ENCODE measurements at regions of chr20 and their contacts with region 1.

Region 1: DNA sequence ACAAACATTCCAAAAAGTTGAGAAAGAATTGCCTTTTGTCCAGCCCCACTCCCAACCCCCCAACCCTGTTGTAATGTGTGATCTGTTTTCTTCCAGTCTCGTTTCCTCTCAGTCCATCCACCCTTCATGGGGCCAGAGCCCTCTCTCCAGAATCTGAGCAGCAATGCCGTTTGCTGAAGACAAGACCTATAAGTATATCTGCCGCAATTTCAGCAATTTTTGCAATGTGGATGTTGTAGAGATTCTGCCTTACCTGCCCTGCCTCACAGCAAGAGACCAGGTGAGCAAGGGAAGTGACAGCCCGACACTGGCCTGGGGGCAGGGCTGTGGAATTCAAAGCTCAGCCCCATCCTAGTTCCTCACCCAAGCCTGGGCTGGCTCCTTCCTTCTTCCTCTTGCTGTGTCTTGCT is 7.8 kb downstream of the MAVS start:
- DNase-seq: no peak
- ATAC-seq: peak; percentile 40
- H3K4me3 ChIP-seq: no peak overlapping the region
- H3K27ac ChIP-seq: no peak overlapping the region
- H3K4me1 ChIP-seq: no peaks in the 10 kb centered on the region
- H3K27me3 ChIP-seq: no peaks in the 10 kb centered on the region
- CTCF ChIP-seq: no peak
- EP300 ChIP-seq: no peak
- POLR2A ChIP-seq: no peak
- RAD21 ChIP-seq: no peak

Region 2: GRCh38 chr20:3590164-3590563 is 264.3 kb before region 1 on chr20:
- CTCF ChIA-PET with region 1: no interaction called
- POLR2A ChIA-PET with region 1: no interaction called
- RAD21 ChIA-PET with region 1: no interaction called
- SMC1A ChIA-PET with region 1: no interaction called
- in situ Hi-C with region 1: no loop called
- intact Hi-C with region 1: no loop called
- DNase-seq: no peak
- ATAC-seq: no peak
- H3K4me3 ChIP-seq: no peak overlapping the region
- H3K27ac ChIP-seq: no peak overlapping the region
- H3K4me1 ChIP-seq: no peaks in the 10 kb centered on the region
- H3K27me3 ChIP-seq: no peaks in the 10 kb centered on the region
- CTCF ChIP-seq: no peak
- EP300 ChIP-seq: no peak
- POLR2A ChIP-seq: no peak
- RAD21 ChIP-seq: no peak

Region 3: DNA sequence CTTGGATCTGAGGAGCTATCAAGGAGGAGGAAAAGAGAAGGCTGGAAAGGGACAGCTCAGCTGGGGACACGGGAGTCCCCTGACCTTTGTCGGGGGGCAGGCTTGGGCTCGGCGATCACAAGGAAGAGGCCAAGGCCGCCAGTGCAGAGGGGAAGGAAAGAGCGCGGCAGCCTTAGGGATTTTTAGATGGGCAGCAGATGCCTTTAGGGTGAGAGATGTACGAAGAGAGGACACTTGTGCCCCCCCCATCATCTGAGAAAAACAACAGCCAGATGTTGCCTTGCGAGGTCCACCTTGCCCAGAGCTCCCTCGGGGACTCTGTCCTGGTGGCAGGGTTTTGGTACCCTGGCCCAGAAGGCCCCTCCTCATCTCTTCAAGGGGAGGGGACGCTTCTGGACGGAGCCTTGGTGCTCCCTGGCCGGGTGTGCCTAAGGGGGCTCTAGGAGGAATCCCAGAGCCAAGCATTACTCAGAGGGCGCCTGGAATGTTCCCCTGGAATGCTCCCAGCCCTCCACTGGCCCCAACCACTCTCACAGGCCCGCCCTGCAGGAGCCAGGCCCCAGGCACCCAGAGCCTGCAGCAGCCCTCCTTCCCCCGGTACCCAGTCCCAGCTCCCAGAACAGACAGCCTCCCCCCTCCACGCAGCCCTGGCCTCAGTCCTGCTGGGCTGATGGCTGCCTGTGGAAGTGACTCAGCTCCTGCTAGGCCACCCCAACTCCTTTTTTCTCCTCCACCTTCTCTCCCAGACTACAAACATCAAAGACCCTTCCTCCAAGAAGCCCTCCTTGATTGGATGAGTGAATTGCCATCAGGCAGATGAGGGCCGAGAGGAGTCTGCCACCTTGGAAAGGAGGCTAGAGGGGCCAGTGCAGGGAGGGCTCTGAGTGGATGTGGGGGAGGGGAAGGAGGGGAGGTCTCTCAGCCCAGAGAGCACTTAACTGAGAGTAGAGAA is 174.4 kb before region 1 on chr20:
- CTCF ChIA-PET with region 1: interaction called, 3 read pairs
- POLR2A ChIA-PET with region 1: no interaction called
- RAD21 ChIA-PET with region 1: no interaction called
- SMC1A ChIA-PET with region 1: interaction called, 3 read pairs
- in situ Hi-C with region 1: no loop called
- intact Hi-C with region 1: loop called (anchors 1 kb)
- DNase-seq: no peak
- ATAC-seq: no peak
- H3K4me3 ChIP-seq: no peak overlapping the region
- H3K27ac ChIP-seq: no peak overlapping the region
- H3K4me1 ChIP-seq: no peaks in the 10 kb centered on the region; the same call in 1 of the 2 replicates
- H3K27me3 ChIP-seq: peaks cover 3% of the 10 kb centered on the region in 2 experiments; a peak in 2 of 4 replicates
- CTCF ChIP-seq: no peak
- EP300 ChIP-seq: no peak
- POLR2A ChIP-seq: no peak
- RAD21 ChIP-seq: no peak

Region 4: GRCh38 chr20:3710703-3711483 is 143.6 kb before region 1 on chr20:
- CTCF ChIA-PET with region 1: interaction called, 4 read pairs
- POLR2A ChIA-PET with region 1: interaction called, 3 read pairs
- RAD21 ChIA-PET with region 1: no interaction called
- SMC1A ChIA-PET with region 1: interaction called, 5 read pairs
- in situ Hi-C with region 1: no loop called
- intact Hi-C with region 1: loop called (anchors 10 kb)
- DNase-seq: no peak
- ATAC-seq: peak; percentile 89
- H3K4me3 ChIP-seq: no peak overlapping the region
- H3K27ac ChIP-seq: no peak overlapping the region
- H3K4me1 ChIP-seq: peaks cover 5% of the 10 kb centered on the region
- H3K27me3 ChIP-seq: no peaks in the 10 kb centered on the region
- CTCF ChIP-seq: peak; percentile 84 to 93 (median 85)
- EP300 ChIP-seq: no peak
- POLR2A ChIP-seq: no peak
- RAD21 ChIP-seq: peak; percentile 80

Region 5: DNA sequence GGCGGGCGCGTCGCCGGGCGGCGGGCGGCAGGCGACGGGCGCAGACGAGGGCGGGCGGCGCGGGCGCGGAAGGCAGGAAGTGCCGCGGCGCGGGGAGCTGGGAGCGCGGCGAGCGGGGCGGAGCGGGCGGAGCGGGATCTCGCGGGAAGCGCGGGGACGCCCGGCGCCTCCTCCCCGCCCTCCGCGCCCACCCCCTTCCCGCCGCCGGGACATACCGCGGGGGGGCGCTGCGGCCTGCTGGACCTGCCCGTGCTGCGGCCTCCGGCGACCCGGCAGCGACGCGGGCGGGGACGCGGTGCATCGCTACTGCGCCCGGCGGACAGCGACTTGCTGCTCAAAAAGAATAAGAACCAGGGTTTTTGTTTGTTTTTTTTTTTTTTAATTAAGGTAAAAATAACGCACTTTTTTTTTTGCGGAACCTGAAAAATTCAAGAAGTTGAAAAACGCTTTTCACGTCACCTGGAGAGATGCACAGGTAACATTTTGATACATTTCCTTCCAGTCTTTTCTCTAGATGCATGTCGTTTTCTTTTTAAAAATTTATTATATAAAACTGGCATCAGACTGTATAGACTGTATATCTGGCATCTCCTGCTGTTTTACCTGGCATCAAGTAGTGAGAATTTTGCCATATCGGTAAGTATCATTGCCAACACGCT is 67.7 kb before region 1 on chr20 and contains the start of gene CENPB:
- CTCF ChIA-PET with region 1: interaction called, 27 read pairs
- POLR2A ChIA-PET with region 1: no interaction called
- RAD21 ChIA-PET with region 1: interaction called, 31 read pairs
- SMC1A ChIA-PET with region 1: interaction called, 9 read pairs
- in situ Hi-C with region 1: no loop called
- intact Hi-C with region 1: loop called (anchors 2 kb)
- DNase-seq: no peak
- ATAC-seq: peak; percentile 97
- H3K4me3 ChIP-seq: peak within 1 kb of the TSS; percentile 82
- H3K27ac ChIP-seq: peak within 1 kb of the TSS; percentile 50
- H3K4me1 ChIP-seq: peaks cover 17% of the 10 kb centered on the region
- H3K27me3 ChIP-seq: no peaks in the 10 kb centered on the region
- CTCF ChIP-seq: peak; percentile 70 to 86 (median 71)
- EP300 ChIP-seq: no peak
- POLR2A ChIP-seq: 0 out of 2 replicates have a peak, but pooled peaks have one; percentile 54
- RAD21 ChIP-seq: peak; percentile 84
- polyA plus RNA-seq, gene CENPB: 0.16 to 0.29 TPM

Region 6: GRCh38 chr20:3820048-3820900 is 34.2 kb before region 1 on chr20 and contains the start of gene AP5S1:
- CTCF ChIA-PET with region 1: interaction called, 48 read pairs
- POLR2A ChIA-PET with region 1: interaction called, 5 read pairs
- RAD21 ChIA-PET with region 1: no interaction called
- SMC1A ChIA-PET with region 1: interaction called, 5 read pairs
- in situ Hi-C with region 1: no loop called
- intact Hi-C with region 1: loop called (anchors 2 kb)
- DNase-seq: peak; percentile 86
- ATAC-seq: peak; percentile 91
- H3K4me3 ChIP-seq: peak within 1 kb of the TSS; percentile 73
- H3K27ac ChIP-seq: peak within 1 kb of the TSS; percentile 99
- H3K4me1 ChIP-seq: peaks cover 5% of the 10 kb centered on the region
- H3K27me3 ChIP-seq: no peaks in the 10 kb centered on the region
- CTCF ChIP-seq: peak; percentile 86 to 96 (median 95)
- EP300 ChIP-seq: 0 out of 4 replicates have a peak, but pooled peaks of 1 of the 2 experiments have one; percentile 15
- POLR2A ChIP-seq: peak; percentile 92
- RAD21 ChIP-seq: peak; percentile 66
- polyA plus RNA-seq, gene AP5S1: 4.4 to 5.8 TPM

Region 7: GRCh38 chr20:3825526-3825925 is 28.9 kb before region 1 on chr20:
- CTCF ChIA-PET with region 1: interaction called, 48 read pairs
- POLR2A ChIA-PET with region 1: interaction called, 5 read pairs
- RAD21 ChIA-PET with region 1: no interaction called
- SMC1A ChIA-PET with region 1: interaction called, 5 read pairs
- in situ Hi-C with region 1: no loop called
- intact Hi-C with region 1: loop called (anchors 2 kb)
- DNase-seq: no peak
- ATAC-seq: no peak
- H3K4me3 ChIP-seq: no peak overlapping the region
- H3K27ac ChIP-seq: no peak overlapping the region
- H3K4me1 ChIP-seq: no peaks in the 10 kb centered on the region; the same call in 1 of the 2 replicates
- H3K27me3 ChIP-seq: no peaks in the 10 kb centered on the region
- CTCF ChIP-seq: no peak
- EP300 ChIP-seq: no peak
- POLR2A ChIP-seq: no peak
- RAD21 ChIP-seq: no peak

Region 8: GRCh38 chr20:4045741-4046140 is 191.3 kb after region 1 on chr20:
- CTCF ChIA-PET with region 1: no interaction called
- POLR2A ChIA-PET with region 1: no interaction called
- RAD21 ChIA-PET with region 1: no interaction called
- SMC1A ChIA-PET with region 1: no interaction called
- in situ Hi-C with region 1: no loop called
- intact Hi-C with region 1: no loop called
- DNase-seq: no peak
- ATAC-seq: no peak
- H3K4me3 ChIP-seq: no peak overlapping the region
- H3K27ac ChIP-seq: no peak overlapping the region
- H3K4me1 ChIP-seq: no peaks in the 10 kb centered on the region
- H3K27me3 ChIP-seq: no peaks in the 10 kb centered on the region; a peak in 1 of 4 replicates
- CTCF ChIP-seq: no peak
- EP300 ChIP-seq: no peak
- POLR2A ChIP-seq: no peak
- RAD21 ChIP-seq: no peak

Region 9: DNA sequence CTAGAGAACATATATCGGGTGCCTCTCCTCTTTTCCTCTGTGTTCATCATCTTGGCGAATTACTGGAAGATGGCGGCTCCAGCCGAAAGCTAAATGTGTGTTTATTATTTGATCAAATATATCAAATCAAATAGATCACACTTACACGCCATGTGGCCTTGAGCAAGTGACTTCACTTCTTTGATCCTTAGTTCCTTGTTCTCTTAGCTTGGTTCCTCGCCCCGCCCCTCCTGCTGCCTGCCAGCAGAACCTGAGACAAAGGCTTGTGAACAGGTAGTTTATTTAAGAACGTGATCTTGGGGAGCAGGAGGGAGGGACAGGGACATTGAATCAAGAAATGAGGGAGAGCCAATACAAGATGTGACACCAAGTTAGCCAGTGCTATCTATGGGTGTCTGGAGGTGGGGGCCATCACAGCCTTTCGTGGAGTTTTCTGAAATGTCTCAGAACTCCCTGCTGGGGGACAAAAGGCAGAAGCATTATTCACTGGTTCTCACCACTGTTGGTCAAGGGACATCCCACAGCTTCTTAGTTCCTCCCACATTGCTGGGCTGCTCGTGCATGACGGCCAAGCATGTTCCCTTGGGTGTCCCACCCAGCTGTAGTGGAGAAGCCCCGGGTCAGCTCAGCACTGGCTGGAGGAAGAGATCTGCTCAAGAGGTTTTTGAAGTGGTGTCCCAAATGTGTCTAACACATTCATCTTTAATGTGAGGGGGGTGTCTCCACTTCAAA is 205.8 kb after region 1 on chr20:
- CTCF ChIA-PET with region 1: no interaction called
- POLR2A ChIA-PET with region 1: no interaction called
- RAD21 ChIA-PET with region 1: no interaction called
- SMC1A ChIA-PET with region 1: no interaction called
- in situ Hi-C with region 1: no loop called
- intact Hi-C with region 1: no loop called
- DNase-seq: peak; percentile 40
- ATAC-seq: peak; percentile 86
- H3K4me3 ChIP-seq: no peak overlapping the region
- H3K27ac ChIP-seq: no peak overlapping the region
- H3K4me1 ChIP-seq: peaks cover 12% of the 10 kb centered on the region
- H3K27me3 ChIP-seq: no peaks in the 10 kb centered on the region
- CTCF ChIP-seq: no peak
- EP300 ChIP-seq: no peak
- POLR2A ChIP-seq: no peak
- RAD21 ChIP-seq: no peak

Region 10: GRCh38 chr20:4073852-4074741 is 219.6 kb after region 1 on chr20:
- CTCF ChIA-PET with region 1: interaction called, 18 read pairs
- POLR2A ChIA-PET with region 1: no interaction called
- RAD21 ChIA-PET with region 1: no interaction called
- SMC1A ChIA-PET with region 1: no interaction called
- in situ Hi-C with region 1: no loop called
- intact Hi-C with region 1: no loop called
- DNase-seq: no peak
- ATAC-seq: no peak
- H3K4me3 ChIP-seq: no peak overlapping the region
- H3K27ac ChIP-seq: no peak overlapping the region
- H3K4me1 ChIP-seq: no peaks in the 10 kb centered on the region
- H3K27me3 ChIP-seq: peaks cover 0 to 3% of the 10 kb centered on the region in 2 experiments; a peak in 1 of 4 replicates
- CTCF ChIP-seq: no peak
- EP300 ChIP-seq: no peak
- POLR2A ChIP-seq: no peak
- RAD21 ChIP-seq: no peak

Measured in GM12878 (cell line).